ENCODE measurements at regions of chr2 and their contacts with region 1.

Region 1: GRCh38 chr2:66434679-66435548 is at the start of gene MEIS1:
- DNase-seq: peak; percentile 73 to 90
- ATAC-seq: peak; percentile 81
- total RNA-seq, gene MEIS1: 10.0 to 38.9 TPM

Region 2: DNA sequence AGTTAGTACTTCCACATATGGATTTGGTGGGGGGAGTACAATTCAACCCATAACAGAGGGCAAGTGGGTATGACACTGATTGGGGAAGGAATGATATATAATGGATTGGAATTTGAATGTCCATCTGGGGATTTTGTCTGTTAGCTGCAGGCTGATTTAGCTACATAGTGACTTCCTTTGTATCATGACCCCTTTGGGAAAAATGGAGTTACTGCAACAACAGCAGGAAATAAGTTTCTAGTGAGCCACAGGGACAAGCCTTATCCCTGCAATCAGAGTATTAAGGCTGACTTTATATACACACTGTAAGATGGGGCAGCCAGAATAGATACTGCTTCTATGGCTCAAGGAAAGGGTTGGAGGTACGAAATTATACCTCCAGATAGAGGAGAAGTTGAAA is 404.4 kb before region 1 on chr2:
- intact Hi-C with region 1: no loop called
- DNase-seq: no peak
- ATAC-seq: no peak

Region 3: GRCh38 chr2:66574701-66575624 is 140.0 kb after region 1 on chr2:
- intact Hi-C with region 1: loop called (anchors 5 to 10 kb)
- DNase-seq: peak; percentile 37 to 56
- ATAC-seq: peak; percentile 39

Region 4: GRCh38 chr2:66699793-66700676 is 265.1 kb after region 1 on chr2:
- intact Hi-C with region 1: loop called (anchors 5 to 10 kb)
- DNase-seq: no peak
- ATAC-seq: peak; percentile 79

Region 5: GRCh38 chr2:67322353-67323001 is 887.6 kb after region 1 on chr2:
- intact Hi-C with region 1: loop called in 1 of 2 experiments (anchors 10 kb)
- DNase-seq: peak; percentile 23 to 48
- ATAC-seq: peak; percentile 76